Natural killer cell (primary cell): ENCODE measurements at regions of chr2 and their contacts with region 1.

Region 1: DNA sequence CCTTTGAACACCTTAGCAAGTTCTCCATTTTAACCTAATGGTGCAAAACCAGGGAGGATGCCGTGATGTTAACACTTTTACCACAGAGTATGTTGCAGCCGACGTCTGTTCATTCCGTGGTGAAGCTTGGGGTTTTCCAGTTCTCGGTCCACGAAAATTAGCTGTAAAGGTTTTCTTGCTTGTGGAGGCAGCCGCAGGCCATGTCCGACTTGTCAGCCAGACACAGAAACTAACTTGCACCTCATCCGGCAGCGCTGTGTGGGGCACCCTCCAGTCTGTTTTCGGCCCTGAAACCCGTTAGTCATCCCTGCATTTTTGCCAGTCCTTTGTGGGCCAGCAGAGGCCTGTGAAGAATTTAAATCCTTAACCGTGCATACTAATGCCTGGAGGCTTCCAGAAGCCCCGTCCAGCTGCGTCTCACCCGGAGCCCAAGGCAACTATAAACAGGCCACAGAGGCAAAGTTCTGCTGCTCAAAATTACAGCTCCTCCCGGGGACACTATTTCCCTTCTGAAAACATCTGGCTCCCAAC is 70.6 kb downstream of the SH3YL1 start:
- DNase-seq: peak; percentile 69 to 84
- ATAC-seq: peak; percentile 87 to 92 (median 89)
- H3K4me3 ChIP-seq: no peak overlapping the region
- H3K4me3 Mint-ChIP-seq: peak overlapping the region; percentile 84
- H3K27ac ChIP-seq: peak overlapping the region; percentile 59
- H3K27ac Mint-ChIP-seq: peak overlapping the region; percentile 83 to 91
- H3K4me1 ChIP-seq: peaks cover 34% of the 10 kb centered on the region
- H3K4me1 Mint-ChIP-seq: peaks cover 41% of the 10 kb centered on the region in 2 donors
- H3K27me3 ChIP-seq: no peaks in the 10 kb centered on the region
- H3K27me3 Mint-ChIP-seq: no peaks in the 10 kb centered on the region
- CTCF ChIP-seq: no peak

Region 2: GRCh38 chr2:166381-166780 is 26.8 kb before region 1 on chr2:
- intact Hi-C with region 1: loop called (anchors 2 kb)
- DNase-seq: peak; percentile 26 to 37
- ATAC-seq: peak; percentile 75 to 96 (median 94)
- H3K4me3 ChIP-seq: no peak overlapping the region
- H3K4me3 Mint-ChIP-seq: no peak overlapping the region
- H3K27ac ChIP-seq: no peak overlapping the region
- H3K27ac Mint-ChIP-seq: peak overlapping the region; percentile 41 to 68
- H3K4me1 ChIP-seq: peaks cover 12% of the 10 kb centered on the region
- H3K4me1 Mint-ChIP-seq: peaks cover 25 to 40% of the 10 kb centered on the region in 2 donors
- H3K27me3 ChIP-seq: peaks cover 2% of the 10 kb centered on the region
- H3K27me3 Mint-ChIP-seq: peaks cover 12 to 24% of the 10 kb centered on the region in 2 donors
- CTCF ChIP-seq: no peak

Region 3: DNA sequence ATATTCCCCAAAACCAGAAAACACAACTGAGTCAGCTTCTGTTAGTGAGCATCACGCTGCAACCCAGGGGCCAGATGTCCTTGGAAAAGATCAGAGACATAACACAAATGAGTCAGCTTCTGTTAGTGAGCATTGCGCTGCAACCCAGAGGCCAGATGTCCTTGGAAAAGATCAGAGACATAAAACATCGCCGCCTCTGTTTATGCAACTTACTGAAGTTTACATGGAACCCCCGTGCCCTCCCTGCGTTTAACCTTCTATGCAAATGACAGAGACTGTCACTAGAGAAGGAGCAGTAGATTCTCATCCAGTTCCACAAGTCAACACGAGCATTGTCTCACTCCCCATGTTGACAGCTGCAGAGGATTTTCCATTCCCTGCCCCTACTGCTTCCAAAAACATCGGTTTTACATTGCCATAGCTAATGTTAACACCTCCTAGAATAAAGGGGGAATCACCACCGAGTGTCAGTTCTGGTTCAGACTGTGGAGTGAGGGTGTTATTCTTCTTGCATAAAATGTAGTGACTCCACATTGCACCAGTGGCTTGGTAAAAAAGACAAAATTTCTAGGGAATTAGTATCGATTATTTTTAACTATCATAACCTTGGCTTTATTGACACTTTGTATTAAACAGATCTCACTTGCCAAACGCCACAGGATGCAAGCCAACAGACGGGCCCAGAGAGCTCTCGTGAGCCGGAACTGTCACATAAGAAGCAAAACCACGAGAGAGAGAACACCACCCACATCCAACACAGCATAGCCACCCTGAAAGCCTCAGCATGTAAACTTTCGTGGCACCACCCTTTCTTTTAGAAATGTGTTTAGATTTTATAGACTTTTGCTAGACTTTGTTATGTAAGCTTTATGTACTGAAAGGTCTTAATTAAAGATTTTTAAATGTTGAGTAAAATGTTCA is 17.1 kb before region 1 on chr2:
- intact Hi-C with region 1: loop called (anchors 1 kb)
- DNase-seq: peak; percentile 46 to 83
- ATAC-seq: peak; percentile 86 to 99 (median 92)
- H3K4me3 ChIP-seq: no peak overlapping the region
- H3K4me3 Mint-ChIP-seq: peak overlapping the region; percentile 88
- H3K27ac ChIP-seq: peak overlapping the region; percentile 20
- H3K27ac Mint-ChIP-seq: peak overlapping the region; percentile 76 to 88
- H3K4me1 ChIP-seq: peaks cover 30% of the 10 kb centered on the region
- H3K4me1 Mint-ChIP-seq: peaks cover 51 to 61% of the 10 kb centered on the region in 2 donors
- H3K27me3 ChIP-seq: peaks cover under 1% of the 10 kb centered on the region
- H3K27me3 Mint-ChIP-seq: no peaks in the 10 kb centered on the region
- CTCF ChIP-seq: no peak

Region 4: GRCh38 chr2:223971-224760 is 31.0 kb after region 1 on chr2:
- intact Hi-C with region 1: loop called (anchors 1 kb)
- DNase-seq: no peak
- ATAC-seq: no peak
- H3K4me3 ChIP-seq: no peak overlapping the region
- H3K4me3 Mint-ChIP-seq: peak overlapping the region; percentile 5
- H3K27ac ChIP-seq: no peak overlapping the region
- H3K27ac Mint-ChIP-seq: peak overlapping the region; percentile 73 to 76
- H3K4me1 ChIP-seq: peaks cover 33% of the 10 kb centered on the region
- H3K4me1 Mint-ChIP-seq: peaks cover 47 to 65% of the 10 kb centered on the region in 2 donors
- H3K27me3 ChIP-seq: no peaks in the 10 kb centered on the region
- H3K27me3 Mint-ChIP-seq: no peaks in the 10 kb centered on the region
- CTCF ChIP-seq: no peak

Region 5: DNA sequence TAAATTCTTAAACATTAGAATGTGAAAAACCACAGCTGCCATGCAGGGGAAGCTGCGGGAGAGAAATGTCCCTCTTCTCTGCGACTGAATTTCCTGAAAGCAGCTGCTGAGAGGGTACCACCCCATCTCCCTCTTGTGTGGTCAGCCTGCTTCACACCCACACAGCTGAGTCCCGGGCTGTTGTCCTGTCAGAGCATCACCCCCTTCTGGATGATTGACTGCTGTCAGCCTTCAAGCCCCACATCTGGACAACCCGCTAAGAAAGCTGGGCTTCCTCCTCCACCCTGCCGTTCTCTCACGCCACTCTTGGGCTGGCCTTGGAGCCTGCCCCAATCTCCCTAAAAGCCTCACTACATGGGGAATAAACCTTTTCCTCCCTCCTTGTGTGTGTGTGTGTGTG is 44.7 kb after region 1 on chr2:
- intact Hi-C with region 1: loop called (anchors 5 kb)
- DNase-seq: peak; percentile 25 to 41
- ATAC-seq: peak; percentile 85 to 95 (median 85)
- H3K4me3 ChIP-seq: no peak overlapping the region
- H3K4me3 Mint-ChIP-seq: peak overlapping the region; percentile 84
- H3K27ac ChIP-seq: peak overlapping the region; percentile 41
- H3K27ac Mint-ChIP-seq: peak overlapping the region; percentile 91 to 94
- H3K4me1 ChIP-seq: peaks cover 27% of the 10 kb centered on the region
- H3K4me1 Mint-ChIP-seq: peaks cover 42 to 47% of the 10 kb centered on the region in 2 donors
- H3K27me3 ChIP-seq: no peaks in the 10 kb centered on the region
- H3K27me3 Mint-ChIP-seq: no peaks in the 10 kb centered on the region
- CTCF ChIP-seq: no peak

Region 6: DNA sequence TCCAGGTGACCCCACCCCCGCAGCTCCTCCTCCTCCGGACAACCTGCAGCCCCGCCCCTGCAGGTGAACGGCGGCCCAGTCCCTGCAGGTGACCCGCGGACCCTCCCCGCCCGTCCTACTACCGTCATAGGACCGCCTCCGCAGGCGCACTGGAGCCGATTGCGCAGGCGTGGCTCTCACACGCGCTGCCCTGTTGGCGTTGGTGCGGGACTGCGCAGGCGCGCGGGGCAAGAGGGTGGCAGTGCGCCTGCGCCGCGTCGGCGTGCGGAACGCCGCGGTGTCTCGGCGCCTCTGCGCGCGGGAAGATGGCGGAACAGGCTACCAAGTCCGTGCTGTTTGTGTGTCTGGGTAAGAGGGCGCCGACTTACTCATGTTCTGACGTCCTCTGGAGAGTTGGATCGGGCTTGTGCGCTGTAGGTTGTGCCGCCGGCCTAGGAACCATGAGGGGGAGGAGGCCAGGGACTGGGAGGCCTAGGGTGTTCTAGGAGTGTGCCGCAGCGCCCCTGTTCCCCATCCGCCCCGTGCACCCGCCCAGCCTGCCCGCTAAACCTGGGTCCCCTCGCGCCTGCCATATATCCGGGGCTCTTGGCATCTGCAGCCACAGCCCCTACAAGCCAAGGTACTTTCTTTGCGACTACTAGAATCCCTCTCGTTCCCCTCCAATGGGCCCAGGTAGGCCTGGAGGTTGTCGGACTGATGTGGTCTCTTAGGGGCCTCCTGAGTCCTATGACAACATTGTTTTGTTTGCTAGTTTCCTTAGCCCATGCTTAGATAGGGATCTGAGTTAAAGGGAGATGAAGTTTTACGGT is 71.7 kb after region 1 on chr2 and contains the start of gene ACP1:
- intact Hi-C with region 1: loop called (anchors 2 kb)
- DNase-seq: peak; percentile 94 to 100
- ATAC-seq: peak; percentile 84 to 88 (median 85)
- H3K4me3 ChIP-seq: peak within 1 kb of the TSS; percentile 94
- H3K4me3 Mint-ChIP-seq: peak within 1 kb of the TSS; percentile 98
- H3K27ac ChIP-seq: peak within 1 kb of the TSS; percentile 85
- H3K27ac Mint-ChIP-seq: peak within 1 kb of the TSS; percentile 92 to 98
- H3K4me1 ChIP-seq: peaks cover 21% of the 10 kb centered on the region
- H3K4me1 Mint-ChIP-seq: peaks cover 45 to 52% of the 10 kb centered on the region in 2 donors
- H3K27me3 ChIP-seq: no peaks in the 10 kb centered on the region
- H3K27me3 Mint-ChIP-seq: no peaks in the 10 kb centered on the region
- CTCF ChIP-seq: no peak
- total RNA-seq, gene ACP1: 87.2 to 104 (median 102) TPM

Region 7: DNA sequence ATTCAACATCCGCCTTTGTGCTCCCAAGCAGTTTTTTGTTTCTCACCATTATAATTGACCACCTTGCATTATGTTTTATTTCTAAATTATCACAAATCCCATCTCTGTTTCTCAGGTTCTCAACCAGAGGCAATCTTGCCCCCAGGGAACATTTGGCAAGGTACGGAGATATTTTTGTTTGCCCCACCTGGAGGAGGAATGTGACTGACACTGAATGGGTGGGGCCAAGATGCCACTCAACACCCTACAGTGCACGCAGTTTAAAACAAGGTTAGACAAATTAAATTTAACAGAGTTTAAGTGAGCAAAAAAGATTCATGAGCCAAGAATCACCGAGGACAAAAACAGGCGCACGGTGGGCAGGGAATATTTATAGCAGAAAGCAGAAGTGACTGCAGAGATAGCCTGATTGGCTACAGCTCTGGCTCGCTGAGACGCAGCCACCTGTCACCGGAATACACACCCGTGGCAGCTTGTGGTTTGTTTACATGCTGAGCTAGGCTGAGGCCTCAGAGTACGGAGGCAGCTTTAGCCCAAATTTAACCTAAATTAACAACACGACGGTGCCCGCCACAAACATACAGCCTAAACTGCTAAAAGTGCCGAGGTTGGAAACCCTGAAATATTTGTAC is 244.7 kb after region 1 on chr2:
- intact Hi-C with region 1: loop called (anchors 5 kb)
- DNase-seq: peak; percentile 65 to 89
- ATAC-seq: peak; percentile 93 to 95 (median 94)
- H3K4me3 ChIP-seq: peak overlapping the region; percentile 9
- H3K4me3 Mint-ChIP-seq: peak overlapping the region; percentile 75
- H3K27ac ChIP-seq: peak overlapping the region; percentile 80
- H3K27ac Mint-ChIP-seq: peak overlapping the region; percentile 65 to 76
- H3K4me1 ChIP-seq: peaks cover 57% of the 10 kb centered on the region
- H3K4me1 Mint-ChIP-seq: peaks cover 37 to 57% of the 10 kb centered on the region in 2 donors
- H3K27me3 ChIP-seq: no peaks in the 10 kb centered on the region
- H3K27me3 Mint-ChIP-seq: no peaks in the 10 kb centered on the region
- CTCF ChIP-seq: no peak